ENCODE measurements at regions of chr4 and their contacts with region 1.

Region 1: GRCh38 chr4:98143001-98143899 is at the start of gene STPG2:
- DNase-seq: peak; percentile 88 to 99 (median 94)

Region 2: DNA sequence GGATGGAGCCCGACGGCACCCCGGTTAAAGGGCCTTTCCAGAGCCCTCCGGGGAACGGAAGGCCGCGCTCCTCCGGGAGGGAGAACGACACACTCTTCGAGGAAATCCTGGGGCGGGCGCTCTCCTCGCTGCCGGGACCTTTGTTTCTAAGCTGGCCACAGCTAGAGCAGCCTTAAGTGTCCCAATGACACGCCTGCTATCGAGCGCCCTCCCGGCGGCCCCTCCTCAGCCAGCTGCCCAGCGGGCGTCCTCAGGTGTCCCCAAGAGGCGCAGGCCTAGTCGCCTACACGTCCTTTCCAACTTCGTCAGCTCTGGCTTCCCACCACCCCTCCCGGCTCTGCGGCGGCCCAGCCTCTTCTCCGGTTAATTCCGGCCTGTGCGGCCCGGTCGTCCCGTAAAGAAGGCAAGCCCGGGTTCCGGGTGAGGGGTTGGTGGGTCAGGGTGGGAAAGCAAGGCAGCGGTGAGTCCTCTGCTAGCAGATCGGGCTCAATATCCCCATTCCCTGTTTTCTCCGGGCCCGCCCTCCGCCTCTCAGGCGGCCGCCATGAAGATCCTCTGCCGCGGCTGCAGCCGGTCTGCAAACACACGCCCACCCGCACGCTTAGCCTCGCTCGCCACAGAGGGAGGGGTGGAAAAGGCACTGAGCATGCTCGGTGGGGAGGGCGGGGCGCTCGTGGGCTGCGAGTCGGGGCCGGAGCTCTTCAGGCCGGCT is 117.5 kb after region 1 on chr4:
- intact Hi-C with region 1: loop called (anchors 5 kb)
- DNase-seq: peak; percentile 91 to 99 (median 93)

Region 3: DNA sequence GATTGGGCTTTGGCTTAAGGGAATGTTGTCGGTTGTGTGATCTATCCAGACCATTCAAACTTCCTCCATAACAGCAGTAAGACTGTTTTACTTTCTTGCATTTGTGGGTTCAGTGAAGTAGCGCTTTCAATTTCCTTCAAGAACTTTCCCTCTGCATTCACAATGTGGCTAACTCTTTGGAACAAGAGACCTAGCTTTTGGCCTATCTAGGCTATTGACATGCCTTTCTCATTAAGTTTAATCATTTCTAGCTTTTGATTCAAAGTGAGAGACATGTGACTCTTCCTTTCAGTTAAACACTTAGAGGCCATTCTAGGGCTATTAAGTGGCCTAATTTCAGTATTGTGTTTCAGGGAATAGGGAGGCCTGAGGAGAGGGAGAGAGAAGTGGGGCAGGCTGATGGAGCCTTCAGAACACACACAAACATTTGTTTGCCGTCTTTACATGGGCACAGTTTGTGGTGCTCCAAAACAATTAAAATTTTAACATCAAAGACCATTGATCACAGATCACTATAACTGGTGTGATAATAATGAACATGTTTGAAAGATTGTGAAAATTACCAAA is 911.3 kb after region 1 on chr4:
- intact Hi-C with region 1: loop called (anchors 10 kb)
- DNase-seq: no peak

Measured in posterior cingulate gyrus (tissue), 11 donors.